PC-3 (cell line): ENCODE measurements at regions of chr6 and their contacts with region 1.

Region 1: GRCh38 chr6:152552616-152553209 is 84.4 kb downstream of the SYNE1 start:
- DNase-seq: peak; percentile 71
- ATAC-seq: peak; percentile 80
- H3K4me3 ChIP-seq: no peak overlapping the region
- H3K27ac ChIP-seq: no peak overlapping the region
- H3K4me1 ChIP-seq: no peaks in the 10 kb centered on the region
- H3K27me3 ChIP-seq: no peaks in the 10 kb centered on the region
- CTCF ChIP-seq: peak; percentile 77

Region 2: DNA sequence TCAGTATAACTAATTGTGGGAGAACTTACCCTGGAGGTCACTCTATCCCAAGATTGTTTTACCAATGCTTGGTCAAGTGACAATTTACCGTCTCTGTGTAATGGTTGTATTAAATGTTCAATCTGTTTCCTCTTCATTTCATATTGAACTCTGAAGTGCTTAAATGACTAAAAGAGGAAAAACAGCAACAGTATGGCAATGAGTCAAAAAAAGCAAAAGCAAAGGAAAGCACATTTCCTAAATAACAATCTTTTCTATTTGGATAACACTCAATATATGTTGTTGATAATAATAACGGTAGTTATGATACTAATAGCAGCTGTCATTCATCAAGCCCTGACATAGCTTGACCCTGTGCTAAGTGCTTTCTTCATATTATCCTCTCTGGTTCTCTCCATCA is 67.9 kb before region 1 on chr6:
- CTCF ChIA-PET with region 1: no interaction called
- POLR2A ChIA-PET with region 1: no interaction called
- intact Hi-C with region 1: loop called (anchors 5 kb)
- DNase-seq: no peak
- ATAC-seq: no peak
- H3K4me3 ChIP-seq: no peak overlapping the region
- H3K27ac ChIP-seq: no peak overlapping the region
- H3K4me1 ChIP-seq: no peaks in the 10 kb centered on the region
- H3K27me3 ChIP-seq: no peaks in the 10 kb centered on the region
- CTCF ChIP-seq: no peak

Region 3: GRCh38 chr6:152642989-152643388 is 90.3 kb after region 1 on chr6:
- CTCF ChIA-PET with region 1: no interaction called
- POLR2A ChIA-PET with region 1: no interaction called
- intact Hi-C with region 1: loop called (anchors 2 kb)
- DNase-seq: peak; percentile 60
- ATAC-seq: peak; percentile 90
- H3K4me3 ChIP-seq: no peak overlapping the region
- H3K27ac ChIP-seq: no peak overlapping the region
- H3K4me1 ChIP-seq: no peaks in the 10 kb centered on the region
- H3K27me3 ChIP-seq: peaks cover 60% of the 10 kb centered on the region
- CTCF ChIP-seq: peak; percentile 65

Region 4: DNA sequence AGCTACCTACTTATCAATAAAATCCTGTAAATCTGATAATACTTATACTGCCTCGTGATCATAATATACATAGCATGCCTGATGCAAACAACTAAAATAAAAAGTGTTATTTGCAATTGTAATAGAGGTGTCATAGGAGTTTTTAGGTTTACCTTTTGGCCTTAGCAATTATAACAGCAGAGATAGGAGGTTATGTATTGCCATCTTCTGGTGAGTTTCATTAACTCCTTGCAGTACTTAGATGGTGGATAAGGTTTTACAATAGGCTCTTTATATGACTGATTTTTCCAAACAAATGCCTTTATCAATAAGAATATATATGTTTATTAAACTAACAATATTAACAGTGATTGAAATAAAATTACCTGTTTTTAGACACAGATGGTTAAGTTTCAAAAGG is 117.2 kb after region 1 on chr6:
- CTCF ChIA-PET with region 1: no interaction called
- POLR2A ChIA-PET with region 1: no interaction called
- intact Hi-C with region 1: loop called (anchors 2 kb)
- DNase-seq: peak; percentile 44
- ATAC-seq: no peak
- H3K4me3 ChIP-seq: no peak overlapping the region
- H3K27ac ChIP-seq: no peak overlapping the region
- H3K4me1 ChIP-seq: no peaks in the 10 kb centered on the region
- H3K27me3 ChIP-seq: peaks cover 45% of the 10 kb centered on the region
- CTCF ChIP-seq: peak; percentile 57

Region 5: DNA sequence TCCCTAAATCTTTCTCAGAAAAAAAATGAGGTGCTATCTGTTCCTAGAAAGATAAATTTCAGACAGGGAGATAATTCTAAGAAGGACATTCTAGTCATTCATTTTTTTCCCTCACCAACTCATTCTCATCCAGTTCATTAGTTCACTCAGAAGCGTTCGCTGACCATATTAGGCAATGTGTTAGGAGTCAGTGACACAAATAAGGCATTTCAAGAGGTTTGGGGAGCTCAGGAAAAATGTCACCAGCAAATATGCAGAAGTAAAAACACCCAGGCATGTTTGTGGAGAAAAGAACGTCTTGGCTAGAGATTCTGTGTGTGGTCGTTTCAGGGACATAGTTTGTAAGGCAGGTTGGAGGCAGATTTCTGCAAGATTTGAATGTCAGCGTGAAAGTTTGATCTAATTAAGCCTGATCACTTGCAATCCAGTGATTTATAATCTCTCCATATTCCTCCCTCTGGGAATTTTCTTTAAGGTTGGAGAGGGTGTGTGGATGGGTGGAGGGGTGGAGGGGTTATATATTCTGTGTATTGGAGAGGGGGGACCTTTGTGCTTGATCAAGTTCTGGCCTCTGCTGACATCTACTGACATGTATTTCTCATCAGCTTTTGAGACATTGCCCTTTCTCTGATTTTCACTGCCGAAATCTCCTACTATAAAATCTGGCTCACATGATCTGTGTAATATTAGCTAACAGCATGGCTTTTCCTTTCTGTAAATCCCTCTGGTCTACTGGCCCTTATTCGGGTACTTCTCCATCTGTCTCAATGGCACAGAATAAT is 148.6 kb after region 1 on chr6:
- CTCF ChIA-PET with region 1: no interaction called
- POLR2A ChIA-PET with region 1: no interaction called
- intact Hi-C with region 1: loop called (anchors 10 kb)
- DNase-seq: peak; percentile 6
- ATAC-seq: peak; percentile 57
- H3K4me3 ChIP-seq: peak overlapping the region; percentile 27; the same call in 1 of the 2 replicates
- H3K27ac ChIP-seq: no peak overlapping the region
- H3K4me1 ChIP-seq: peaks cover 4% of the 10 kb centered on the region; the same call in 1 of the 2 replicates
- H3K27me3 ChIP-seq: peaks cover 17% of the 10 kb centered on the region
- CTCF ChIP-seq: peak; percentile 34